Activated CD4-positive, alpha-beta T cell treated with anti-CD3 and anti-CD28 coated beads, Interleukin-2, amount 10 ng/mL, durations not matched to agents 24 days and 14 days (primary cell): ENCODE measurements at regions of chr16 and their contacts with region 1.

Region 1: GRCh38 chr16:11051879-11052808 is 107.8 kb downstream of the CLEC16A start:
- DNase-seq: peak; percentile 93
- H3K4me3 Mint-ChIP-seq: peak overlapping the region; percentile 46
- H3K27ac Mint-ChIP-seq: peak overlapping the region; percentile 89
- H3K4me1 Mint-ChIP-seq: peaks cover 77% of the 10 kb centered on the region
- H3K27me3 Mint-ChIP-seq: no peaks in the 10 kb centered on the region

Region 2: DNA sequence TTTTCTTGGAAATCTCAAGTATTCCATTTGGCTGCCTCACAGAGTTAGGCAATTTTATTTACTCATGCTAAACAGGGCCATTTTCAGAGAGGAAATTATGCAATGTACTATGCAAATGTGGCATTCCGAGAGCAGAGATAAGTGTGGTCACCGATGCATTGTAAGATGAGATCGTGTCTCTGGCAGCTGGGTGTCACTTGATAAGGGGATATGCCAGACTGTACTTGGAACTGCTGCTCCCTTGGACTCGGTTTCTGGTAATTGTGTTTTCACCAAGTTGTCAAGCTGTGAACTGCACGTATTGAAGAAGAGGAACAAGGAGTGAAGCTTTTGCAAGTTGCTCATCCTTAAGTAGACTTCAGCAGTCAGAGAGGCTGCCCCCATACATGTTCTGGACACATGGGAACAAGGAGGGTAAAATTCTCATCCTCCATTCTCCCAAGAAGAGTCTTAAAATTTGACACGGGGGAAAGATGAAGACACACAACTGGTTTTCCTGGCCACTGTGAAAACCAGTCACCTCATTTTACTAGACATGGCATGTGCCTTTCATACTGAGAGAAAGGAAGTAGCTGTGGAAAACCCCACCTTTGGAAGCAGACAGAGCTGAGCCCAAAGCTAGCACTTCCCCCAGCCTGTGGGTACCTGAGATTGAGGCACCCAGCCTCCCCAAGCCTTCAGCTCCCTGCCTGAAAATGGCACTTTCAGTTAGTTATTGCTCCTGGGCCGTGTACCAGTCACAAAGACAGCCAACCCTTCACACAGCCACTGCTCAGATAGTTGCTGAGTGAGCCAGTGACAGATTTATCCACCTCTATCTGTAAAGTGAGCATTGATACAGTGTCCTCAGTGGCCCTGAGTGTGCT is 53.1 kb after region 1 on chr16:
- intact Hi-C with region 1: loop called (anchors 1 kb)
- DNase-seq: peak; percentile 84
- H3K4me3 Mint-ChIP-seq: peak overlapping the region; percentile 73
- H3K27ac Mint-ChIP-seq: peak overlapping the region; percentile 92
- H3K4me1 Mint-ChIP-seq: peaks cover 65% of the 10 kb centered on the region
- H3K27me3 Mint-ChIP-seq: no peaks in the 10 kb centered on the region

Region 3: DNA sequence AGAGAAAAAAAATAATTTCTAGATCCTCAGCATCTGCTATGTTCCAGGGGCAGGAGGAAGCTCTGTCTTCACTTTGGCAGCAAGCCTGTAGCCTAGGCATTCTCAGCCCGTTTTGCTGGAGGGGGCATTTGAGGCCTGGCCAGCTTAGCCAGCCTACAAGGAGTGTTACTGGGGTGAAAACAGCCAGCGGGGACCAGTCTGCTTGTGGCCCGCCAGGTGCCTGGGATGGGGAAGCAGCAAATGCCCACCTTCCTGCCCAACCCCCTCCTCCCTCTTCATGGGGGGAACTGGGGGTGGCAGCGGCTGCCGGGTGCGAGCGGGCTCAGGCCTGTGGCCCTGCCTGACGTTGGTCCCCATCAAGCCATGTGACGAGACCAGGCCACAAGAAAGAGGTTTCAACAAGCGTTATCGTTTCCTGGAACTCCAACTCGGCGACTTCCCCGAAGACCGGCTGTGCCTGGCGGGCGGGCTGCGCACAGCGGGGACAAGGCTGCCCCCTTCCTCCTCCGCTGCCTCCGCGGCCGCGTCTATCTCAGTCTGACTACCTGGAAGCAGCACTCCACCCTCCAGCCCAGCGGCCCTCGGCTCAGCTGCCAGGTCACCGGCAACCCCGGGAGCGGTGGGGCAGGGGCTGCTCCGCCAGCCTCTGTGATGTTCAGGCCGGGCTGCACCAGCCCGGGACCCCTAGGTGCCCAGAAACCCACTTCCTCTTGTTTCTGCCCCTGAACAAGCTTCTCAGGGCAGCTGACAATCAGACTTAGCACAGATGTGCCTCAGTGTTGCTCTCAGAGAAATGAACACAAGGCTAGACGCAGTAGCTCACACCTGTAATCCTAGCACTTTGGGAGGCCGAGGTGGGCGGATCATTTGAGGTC is 180.9 kb after region 1 on chr16:
- intact Hi-C with region 1: loop called (anchors 1 kb)
- DNase-seq: peak; percentile 98
- H3K4me3 Mint-ChIP-seq: peak overlapping the region; percentile 78
- H3K27ac Mint-ChIP-seq: peak overlapping the region; percentile 98
- H3K4me1 Mint-ChIP-seq: peaks cover 74% of the 10 kb centered on the region
- H3K27me3 Mint-ChIP-seq: no peaks in the 10 kb centered on the region